Posterior cingulate gyrus (tissue), 11 donors: ENCODE measurements at regions of chr12 and their contacts with region 1.

Region 1: GRCh38 chr12:124992874-124993625 is 395 bp upstream of the BRI3BP start:
- DNase-seq: peak in 5 of 10 donors; percentile 20 to 81 (median 59)

Region 2: GRCh38 chr12:124917135-124917840 is 75.8 kb before region 1 on chr12:
- intact Hi-C with region 1: no loop called
- DNase-seq: peak; percentile 94 to 99 (median 97)

Region 3: DNA sequence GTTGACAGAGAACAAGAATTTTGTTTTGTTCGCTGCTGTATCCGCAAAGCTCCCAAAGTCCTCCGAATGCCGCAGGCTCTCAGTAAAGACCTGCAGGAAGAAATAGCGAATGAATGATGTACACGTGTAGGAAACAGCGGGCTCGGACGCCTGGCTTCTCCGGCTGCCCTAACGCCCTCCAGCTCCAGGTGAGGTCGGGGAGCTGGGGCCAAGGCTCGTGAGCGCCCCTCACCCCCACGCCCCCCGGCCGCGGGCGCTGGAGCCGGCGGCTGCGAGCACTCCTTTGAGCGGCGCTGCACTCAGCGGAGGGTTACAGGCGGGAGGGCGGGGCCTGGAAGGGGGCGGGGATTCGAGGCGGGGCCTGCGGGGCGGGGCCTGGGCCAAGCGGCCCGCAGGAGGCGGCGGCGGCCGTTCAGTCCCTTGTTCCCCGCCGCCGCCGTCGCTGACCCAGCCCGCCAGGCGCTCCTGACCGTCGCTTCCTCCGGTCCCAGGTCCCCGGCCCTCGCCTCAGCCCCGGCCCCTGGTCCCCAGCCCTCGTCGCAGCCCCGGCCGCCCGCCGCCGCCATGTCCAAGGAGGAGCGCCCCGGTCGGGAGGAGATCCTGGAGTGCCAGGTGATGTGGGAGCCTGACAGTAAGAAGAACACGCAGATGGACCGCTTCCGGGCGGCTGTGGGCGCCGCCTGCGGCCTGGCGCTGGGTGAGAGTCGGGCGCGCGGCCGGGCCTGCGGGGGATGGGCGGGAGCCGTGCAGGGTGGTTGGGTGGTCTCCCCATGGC is 72.2 kb after region 1 on chr12 and contains the start of gene AACS:
- intact Hi-C with region 1: loop called (anchors 5 kb)
- DNase-seq: peak; percentile 70 to 97 (median 83)

Region 4: DNA sequence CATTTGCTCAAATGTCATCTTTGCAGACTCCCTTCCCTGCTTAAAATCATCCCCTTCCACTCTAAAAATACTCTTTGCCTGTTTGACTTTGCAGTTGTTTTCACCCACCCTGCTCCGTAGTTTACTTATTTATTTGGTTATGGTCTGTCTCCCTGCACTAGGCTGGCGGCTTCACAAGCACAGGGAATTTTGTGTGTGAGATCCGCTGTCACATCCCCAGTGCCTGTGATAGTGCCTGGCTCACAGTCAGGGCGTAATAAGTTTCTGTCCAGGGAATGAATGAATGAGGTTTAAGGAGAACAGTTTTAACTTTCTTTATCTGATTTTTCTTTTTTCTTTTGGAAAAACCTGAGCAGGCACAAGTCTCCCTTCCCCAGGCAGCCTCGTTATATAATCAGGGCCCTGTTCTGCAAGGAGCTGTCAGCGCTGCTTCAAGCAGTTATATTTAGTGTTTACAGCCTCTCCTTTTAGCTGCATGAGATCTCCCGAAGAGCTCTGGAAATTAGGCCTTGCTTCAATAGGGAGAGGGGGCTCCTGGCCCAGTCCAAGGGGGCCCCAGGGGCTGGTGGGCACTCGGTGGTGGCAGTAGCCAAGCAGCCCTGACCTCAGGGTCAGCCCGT is 179.3 kb after region 1 on chr12:
- intact Hi-C with region 1: no loop called
- DNase-seq: peak in 7 of 10 donors; percentile 18 to 91 (median 44)